ENCODE measurements at regions of chr2 and their contacts with region 1.

Region 1: GRCh38 chr2:233418761-233419625 is 64.7 kb downstream of the DGKD start:
- DNase-seq: no peak
- ATAC-seq: no peak
- H3K4me3 Mint-ChIP-seq: no peak overlapping the region
- H3K27ac Mint-ChIP-seq: peak overlapping the region; percentile 69
- H3K4me1 Mint-ChIP-seq: peaks cover 45% of the 10 kb centered on the region
- H3K27me3 Mint-ChIP-seq: no peaks in the 10 kb centered on the region
- CTCF ChIP-seq: no peak

Region 2: GRCh38 chr2:233363744-233364235 is 55.2 kb before region 1 on chr2:
- CTCF ChIA-PET with region 1: no interaction called
- POLR2A ChIA-PET with region 1: no interaction called
- DNase-seq: no peak
- ATAC-seq: no peak
- H3K4me3 Mint-ChIP-seq: no peak overlapping the region
- H3K27ac Mint-ChIP-seq: no peak overlapping the region
- H3K4me1 Mint-ChIP-seq: peaks cover 10% of the 10 kb centered on the region
- H3K27me3 Mint-ChIP-seq: no peaks in the 10 kb centered on the region
- CTCF ChIP-seq: no peak

Region 3: GRCh38 chr2:233404222-233404621 is 14.8 kb before region 1 on chr2:
- CTCF ChIA-PET with region 1: interaction called, 12 read pairs
- POLR2A ChIA-PET with region 1: no interaction called
- DNase-seq: peak; percentile 51
- ATAC-seq: peak; percentile 61
- H3K4me3 Mint-ChIP-seq: no peak overlapping the region
- H3K27ac Mint-ChIP-seq: no peak overlapping the region
- H3K4me1 Mint-ChIP-seq: peaks cover 27% of the 10 kb centered on the region
- H3K27me3 Mint-ChIP-seq: no peaks in the 10 kb centered on the region
- CTCF ChIP-seq: no peak; the same call in 1 of the 2 replicates

Region 4: DNA sequence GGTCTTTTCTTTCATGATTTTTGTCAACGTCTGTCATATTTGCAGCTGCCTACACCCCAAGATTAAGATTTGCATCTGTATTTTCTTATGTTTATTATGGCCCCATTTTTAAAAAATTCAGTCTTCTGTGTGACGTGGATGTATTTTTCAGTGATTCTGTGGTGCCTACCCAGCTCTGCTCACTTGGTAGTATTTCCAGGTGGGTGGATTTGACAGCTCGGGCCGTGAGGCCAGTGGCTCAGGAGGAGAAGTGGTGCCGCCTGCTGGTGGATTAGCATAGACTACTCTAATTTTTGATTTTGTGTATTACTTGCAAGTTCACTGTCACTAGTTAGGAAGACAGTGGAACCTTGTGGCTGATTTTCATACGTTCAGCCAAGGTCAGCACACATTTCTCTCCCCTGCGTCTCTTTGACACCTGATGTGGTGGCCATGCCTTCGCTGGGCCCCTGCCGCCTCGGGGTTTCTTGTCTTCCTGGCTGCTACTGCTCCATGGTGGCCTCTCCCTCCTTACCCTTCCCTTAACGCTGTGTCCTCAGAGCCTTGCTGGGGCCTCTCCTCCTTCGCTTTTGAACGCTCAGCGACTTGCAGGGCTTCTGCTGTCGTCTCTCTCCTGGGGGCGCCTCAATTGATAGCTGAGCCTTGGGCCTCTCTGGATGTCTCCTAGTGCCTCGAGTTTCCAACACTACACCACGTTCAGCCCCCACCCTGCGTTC is 24.6 kb after region 1 on chr2:
- CTCF ChIA-PET with region 1: interaction called, 21 read pairs
- POLR2A ChIA-PET with region 1: no interaction called
- DNase-seq: peak; percentile 80
- ATAC-seq: peak; percentile 66
- H3K4me3 Mint-ChIP-seq: no peak overlapping the region
- H3K27ac Mint-ChIP-seq: no peak overlapping the region
- H3K4me1 Mint-ChIP-seq: peaks cover 4% of the 10 kb centered on the region
- H3K27me3 Mint-ChIP-seq: no peaks in the 10 kb centered on the region
- CTCF ChIP-seq: peak; percentile 71

Measured in WTC11 (cell line).